MCF 10A (cell line): ENCODE measurements at regions of chr12 and their contacts with region 1.

Region 1: DNA sequence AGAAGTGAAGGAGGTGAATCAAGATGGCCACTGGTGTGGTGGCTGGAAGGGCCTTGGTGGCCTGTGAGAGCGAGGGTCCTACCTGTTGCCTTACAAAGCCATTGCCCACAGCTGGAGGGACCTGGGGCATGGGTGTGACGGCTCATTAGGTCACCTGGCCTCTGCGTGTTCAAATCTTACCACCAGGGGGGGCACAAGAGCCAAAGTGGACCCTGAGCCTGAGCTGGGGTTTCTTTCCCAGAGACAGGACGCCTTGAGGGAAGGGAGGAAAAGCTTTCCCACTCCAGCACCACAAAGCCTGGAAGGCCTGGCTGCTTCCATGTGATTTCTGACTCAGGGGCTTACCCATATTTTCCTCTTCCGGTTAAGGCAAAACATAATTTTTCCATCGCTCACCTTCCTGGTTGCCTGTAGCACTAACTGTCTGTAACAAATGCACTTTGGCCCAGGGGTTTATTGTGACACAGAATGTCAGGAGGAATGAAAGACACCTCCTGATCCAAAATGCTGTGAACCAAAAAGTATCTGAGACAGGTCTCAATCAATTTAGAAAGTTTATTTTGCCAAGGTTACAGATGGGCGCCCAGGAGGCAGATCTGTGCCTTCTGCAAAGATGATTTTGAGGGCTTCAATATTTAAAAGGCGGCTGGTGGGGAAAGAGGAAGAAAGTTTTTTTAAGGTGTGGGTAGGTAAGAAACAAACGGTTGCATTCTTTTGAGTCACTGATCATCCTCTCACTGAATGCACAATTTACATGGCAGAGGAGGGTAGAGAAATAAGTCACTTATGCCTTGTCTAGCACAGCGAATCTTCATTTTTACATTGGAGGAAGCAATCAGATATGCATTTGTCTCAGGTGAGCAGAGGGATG is 4.3 kb upstream of the CD9 start:
- DNase-seq: peak; percentile 92
- H3K4me3 Mint-ChIP-seq: no peak overlapping the region
- H3K27ac Mint-ChIP-seq: peak overlapping the region; percentile 61
- H3K4me1 Mint-ChIP-seq: peaks cover 27% of the 10 kb centered on the region
- H3K27me3 Mint-ChIP-seq: peaks cover 12% of the 10 kb centered on the region
- CTCF ChIP-seq: peak; percentile 88

Region 2: DNA sequence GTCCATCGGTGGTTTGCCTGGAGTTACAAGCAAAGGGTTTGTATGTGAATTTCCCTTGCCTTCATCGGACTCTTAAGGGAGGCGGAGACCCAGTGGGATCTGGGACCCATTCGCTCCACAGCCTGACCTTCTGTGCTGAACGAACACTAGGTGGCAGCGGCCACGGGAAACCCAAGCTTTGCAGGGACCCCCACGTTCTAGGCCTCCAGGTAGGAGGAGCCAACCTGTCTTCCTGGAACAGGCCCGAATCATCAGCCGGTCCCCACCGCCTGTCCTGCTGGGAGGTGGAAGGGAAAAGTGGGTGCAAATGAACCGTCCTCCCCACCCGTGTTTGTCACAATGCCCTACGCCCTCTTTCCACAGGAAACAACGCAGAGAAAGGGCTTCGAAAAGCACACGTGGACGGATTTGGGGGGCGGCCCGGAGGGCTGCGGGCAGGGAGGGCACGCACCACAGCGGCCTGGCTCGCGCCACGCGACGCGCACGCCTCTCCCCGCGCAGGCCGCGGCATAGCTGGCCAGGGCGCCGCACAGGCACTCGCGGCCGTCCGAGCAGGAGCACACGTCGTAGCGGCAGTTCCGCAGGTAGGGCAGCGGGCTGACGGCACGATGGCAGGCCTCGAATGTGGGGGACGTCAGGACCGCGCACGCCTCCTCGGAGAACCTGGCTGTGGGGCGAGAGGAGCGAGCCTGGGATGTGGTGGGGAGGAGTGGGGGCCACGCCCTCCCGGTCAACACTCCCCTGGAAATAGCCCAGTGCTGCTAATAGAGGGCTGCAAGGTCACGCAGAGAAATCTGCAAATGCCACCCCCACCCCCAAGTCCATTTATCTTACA is 139.3 kb before region 1 on chr12:
- CTCF ChIA-PET with region 1: interaction called, 10 read pairs
- POLR2A ChIA-PET with region 1: interaction called, 3 read pairs
- intact Hi-C with region 1: no loop called
- DNase-seq: no peak
- H3K4me3 Mint-ChIP-seq: no peak overlapping the region
- H3K27ac Mint-ChIP-seq: no peak overlapping the region
- H3K4me1 Mint-ChIP-seq: no peaks in the 10 kb centered on the region
- H3K27me3 Mint-ChIP-seq: no peaks in the 10 kb centered on the region
- CTCF ChIP-seq: no peak

Region 3: DNA sequence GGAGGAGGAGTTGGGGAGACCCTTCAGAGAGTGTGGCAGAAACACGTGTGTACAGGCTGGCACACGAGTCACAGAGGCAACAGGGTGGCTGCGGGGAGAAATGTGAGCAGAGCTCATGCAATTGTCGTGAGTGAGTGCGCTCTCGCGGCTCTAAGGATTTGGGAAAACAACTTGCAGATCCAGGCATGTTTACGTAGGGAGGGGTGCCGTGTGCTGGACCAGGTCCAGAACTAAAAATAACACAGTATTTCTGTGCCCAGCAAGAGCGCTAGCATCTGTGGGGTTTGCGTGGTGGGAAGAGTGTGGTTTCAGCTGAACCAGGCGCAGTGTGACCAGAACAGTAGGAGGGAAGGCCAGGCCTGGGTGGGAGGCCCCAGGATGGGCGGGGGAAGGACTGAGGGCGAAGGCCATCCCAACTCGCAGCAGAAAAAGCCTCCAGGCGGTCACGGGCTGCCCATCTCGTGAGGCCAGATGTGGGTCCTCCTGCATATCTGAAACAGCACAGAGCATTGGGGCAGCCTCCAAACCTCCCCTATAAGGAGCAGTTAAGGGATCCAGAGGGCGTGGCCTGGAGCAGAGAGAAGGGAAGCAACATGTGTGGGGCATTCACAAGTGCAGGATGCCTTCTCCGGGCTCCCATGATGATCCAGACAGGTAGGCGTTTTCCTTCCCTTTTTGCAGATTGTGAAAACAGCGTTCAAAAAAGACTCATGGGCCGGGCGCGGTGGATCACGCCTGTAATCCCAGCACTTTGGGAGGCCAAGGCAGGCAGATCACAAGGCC is 13.6 kb before region 1 on chr12:
- CTCF ChIA-PET with region 1: interaction called, 23 read pairs
- POLR2A ChIA-PET with region 1: interaction called, 15 read pairs
- intact Hi-C with region 1: no loop called
- DNase-seq: peak; percentile 92
- H3K4me3 Mint-ChIP-seq: peak overlapping the region; percentile 36
- H3K27ac Mint-ChIP-seq: no peak overlapping the region
- H3K4me1 Mint-ChIP-seq: peaks cover 19% of the 10 kb centered on the region
- H3K27me3 Mint-ChIP-seq: no peaks in the 10 kb centered on the region
- CTCF ChIP-seq: no peak

Region 4: DNA sequence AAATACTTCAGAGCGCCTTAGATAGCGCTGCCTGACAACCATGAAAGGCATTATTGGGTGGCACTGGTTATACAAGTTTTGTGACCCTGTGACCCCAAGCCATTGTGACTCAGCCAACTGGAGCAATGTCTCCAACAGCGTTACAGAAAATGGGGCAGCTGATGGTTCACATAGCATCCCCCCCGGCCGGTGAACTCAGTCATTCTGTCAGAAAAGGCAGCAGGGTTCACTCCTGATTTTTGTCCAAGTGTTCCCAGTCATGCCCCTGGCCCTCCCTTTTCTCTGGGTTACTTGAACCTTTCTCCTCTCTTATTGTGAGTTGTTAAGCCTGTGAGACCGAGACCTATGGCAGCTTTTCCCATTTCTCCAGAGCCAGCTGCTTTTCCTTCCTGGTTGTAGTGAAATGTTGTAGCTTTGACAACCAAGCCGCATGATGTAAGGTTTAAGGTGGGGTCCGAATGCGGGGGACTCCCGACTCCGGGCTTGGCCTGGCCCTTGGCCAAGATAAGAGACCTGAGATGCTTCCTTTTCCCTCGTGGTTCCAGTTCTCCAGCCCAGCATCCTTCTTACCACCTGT is 26.3 kb after region 1 on chr12:
- CTCF ChIA-PET with region 1: interaction called, 73 read pairs
- POLR2A ChIA-PET with region 1: interaction called, 48 read pairs
- intact Hi-C with region 1: loop called (anchors 2 kb)
- DNase-seq: no peak
- H3K4me3 Mint-ChIP-seq: no peak overlapping the region
- H3K27ac Mint-ChIP-seq: peak overlapping the region; percentile 54
- H3K4me1 Mint-ChIP-seq: peaks cover 48% of the 10 kb centered on the region
- H3K27me3 Mint-ChIP-seq: no peaks in the 10 kb centered on the region
- CTCF ChIP-seq: no peak

Region 5: DNA sequence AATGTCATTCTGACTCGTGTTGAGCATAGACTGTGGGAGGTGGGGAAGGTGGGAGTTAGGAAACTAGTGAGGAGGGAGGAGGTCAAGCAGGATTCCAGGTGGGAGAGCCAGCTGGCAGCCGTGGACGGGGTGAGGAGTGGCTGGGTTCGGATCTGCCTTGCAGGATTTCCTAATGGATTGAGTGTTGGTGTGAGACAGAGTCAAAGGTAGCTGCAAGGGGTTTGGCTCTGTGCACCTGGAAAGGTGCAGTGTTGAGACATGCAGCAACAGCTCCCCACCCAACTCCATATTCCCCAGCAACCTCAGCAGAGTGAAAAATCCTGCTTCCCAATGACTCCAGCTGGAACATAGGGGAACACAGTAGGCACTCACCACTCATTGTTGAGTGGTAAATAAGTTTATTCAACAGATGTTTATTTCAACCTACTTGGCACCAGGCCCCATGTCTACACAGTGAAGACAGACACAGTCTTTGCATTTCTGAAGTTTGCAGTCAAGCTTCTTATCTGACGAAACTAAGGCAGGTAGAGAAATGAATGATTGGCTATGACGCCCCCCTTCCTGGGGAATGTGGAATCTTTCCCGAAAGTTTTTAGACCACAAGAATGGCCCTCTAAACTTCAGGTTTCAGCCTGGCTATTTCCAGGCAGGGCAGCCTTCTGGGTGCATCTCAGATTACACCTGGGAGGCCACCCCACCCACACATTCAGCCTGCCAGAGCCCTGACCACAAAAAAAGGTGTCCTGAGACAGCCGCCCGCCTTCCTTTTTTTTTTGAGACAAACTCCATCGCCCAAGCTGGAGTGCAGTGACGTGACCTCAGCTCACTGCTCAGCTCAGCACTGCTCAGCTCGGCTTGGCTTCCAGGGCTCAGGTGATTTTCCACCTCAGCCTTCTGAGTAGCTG is 76.7 kb after region 1 on chr12:
- CTCF ChIA-PET with region 1: interaction called, 369 read pairs
- POLR2A ChIA-PET with region 1: interaction called, 116 read pairs
- intact Hi-C with region 1: no loop called
- DNase-seq: peak; percentile 96
- H3K4me3 Mint-ChIP-seq: no peak overlapping the region
- H3K27ac Mint-ChIP-seq: peak overlapping the region; percentile 96
- H3K4me1 Mint-ChIP-seq: peaks cover 28% of the 10 kb centered on the region
- H3K27me3 Mint-ChIP-seq: no peaks in the 10 kb centered on the region
- CTCF ChIP-seq: no peak